ENCODE measurements at regions of chr6 and their contacts with region 1.

Region 1: GRCh38 chr6:150813319-150813992 is 52.0 kb upstream of the MTHFD1L start:
- DNase-seq: no peak
- ATAC-seq: peak; percentile 6

Region 2: DNA sequence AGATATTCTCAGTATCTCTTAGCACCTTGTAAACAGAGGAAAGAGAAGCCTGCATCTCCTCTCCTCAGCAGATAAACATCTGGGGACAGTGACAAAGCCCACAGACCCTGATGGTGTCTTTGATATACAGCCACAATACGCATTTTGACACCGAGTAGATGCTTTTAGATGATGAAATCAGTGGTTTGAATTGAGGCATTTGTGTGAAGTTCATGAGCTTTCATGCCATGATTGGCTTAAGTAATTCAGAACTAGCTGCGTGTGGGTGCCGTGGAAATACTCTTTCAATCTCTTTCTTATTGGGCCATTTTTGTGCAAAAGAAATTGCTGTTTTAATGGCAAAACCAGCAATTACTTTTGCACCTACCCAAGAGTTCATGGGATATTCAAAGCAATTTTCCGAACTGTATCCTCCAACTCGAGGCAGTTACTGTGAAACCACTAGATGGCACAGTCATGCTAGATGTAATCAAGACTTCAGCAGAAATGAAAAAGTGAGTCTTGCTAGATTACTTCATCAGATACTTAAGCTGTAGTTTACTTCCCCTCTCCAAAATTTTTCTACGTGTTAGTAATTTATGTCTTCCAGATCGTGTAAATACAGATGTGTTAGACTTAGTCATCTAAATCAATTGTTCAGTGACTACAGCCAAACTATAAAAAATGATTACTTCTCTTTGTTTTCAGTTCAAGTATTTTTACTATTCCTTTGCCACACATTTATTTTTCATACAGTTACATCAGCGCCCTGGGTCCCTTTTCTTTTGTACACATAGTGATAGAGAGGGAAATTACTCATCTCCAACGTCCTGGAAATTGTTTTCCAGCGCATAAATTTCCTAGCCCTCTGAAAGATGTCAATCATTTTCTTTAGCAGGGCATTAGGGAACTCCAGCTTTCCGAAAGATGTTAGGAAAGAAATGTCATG is 395.3 kb before region 1 on chr6:
- intact Hi-C with region 1: loop called (anchors 5 kb)
- DNase-seq: no peak
- ATAC-seq: peak; percentile 95

Measured in sciatic nerve (tissue), 2 donors.